Posterior vena cava (tissue), 2 donors: ENCODE measurements at regions of chr7 and their contacts with region 1.

Region 1: GRCh38 chr7:142323706-142324105 is 65.8 kb upstream of the PRSS58 start:
- DNase-seq: no peak

Region 2: GRCh38 chr7:141864775-141865447 is 458.8 kb before region 1 on chr7:
- intact Hi-C with region 1: loop called in 1 of 2 experiments (anchors 2 kb)
- DNase-seq: no peak

Region 3: DNA sequence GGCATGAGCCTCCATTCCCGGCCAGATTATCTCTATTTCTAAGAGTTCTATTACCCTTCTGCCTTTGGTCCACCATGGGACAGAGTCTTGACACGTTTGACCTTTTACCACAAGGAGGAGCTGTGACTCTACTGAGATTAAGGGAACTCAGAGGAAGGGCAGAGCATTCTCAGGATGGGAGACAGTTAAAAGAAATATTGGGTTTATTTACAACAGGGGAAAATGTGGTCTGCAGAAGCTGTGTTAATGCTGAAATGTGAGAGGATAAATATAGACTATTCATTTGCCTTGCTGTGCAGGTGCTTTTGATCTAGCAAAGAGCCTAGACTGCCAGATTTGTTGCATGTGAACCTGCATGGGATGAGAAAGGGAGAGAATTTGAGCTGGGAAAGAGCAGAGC is 20.1 kb before region 1 on chr7:
- intact Hi-C with region 1: no loop called
- DNase-seq: no peak

Region 4: DNA sequence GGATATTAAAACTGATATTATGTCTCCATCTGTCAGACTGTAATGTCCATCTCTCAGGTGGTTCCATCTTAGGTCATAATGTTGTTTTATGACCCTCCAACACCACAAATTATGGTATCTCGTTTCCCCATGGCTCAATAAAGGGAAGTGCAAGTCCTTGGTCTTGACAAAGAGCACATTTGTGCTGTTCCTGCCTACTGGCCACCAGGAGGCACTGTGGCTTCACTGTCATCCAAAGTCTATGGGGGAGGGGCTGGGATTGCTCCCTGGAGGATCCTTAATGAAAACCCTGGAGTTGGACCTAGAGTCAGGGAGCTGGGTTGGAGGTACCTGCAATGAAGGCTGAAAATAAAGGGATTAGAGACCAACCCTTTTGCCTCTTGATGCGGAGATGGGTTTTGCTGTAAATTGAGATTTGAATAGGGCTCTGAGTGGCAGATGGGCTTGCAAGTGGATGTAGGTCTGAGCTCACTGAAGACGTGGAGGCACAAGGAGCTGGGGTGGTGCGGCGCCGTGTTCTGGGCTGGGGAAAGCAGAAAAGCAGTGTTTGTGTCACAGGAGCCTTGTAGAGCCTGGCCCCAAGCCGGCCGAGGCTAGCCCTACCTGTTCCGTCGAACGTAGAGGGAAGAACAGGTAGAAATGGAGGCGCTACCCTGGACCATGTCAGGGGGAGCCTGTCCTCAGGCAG is 114.7 kb after region 1 on chr7:
- intact Hi-C with region 1: no loop called
- DNase-seq: no peak